ENCODE measurements at regions of chr9 and their contacts with region 1.

Region 1: GRCh38 chr9:129653823-129654553 is 11.5 kb upstream of the PRRX2 start:
- DNase-seq: peak in 2 of 5 donors; percentile 22 to 56
- H3K4me3 ChIP-seq: no peak overlapping the region
- H3K27ac ChIP-seq: peak overlapping the region in 1 of 2 donors; percentile 47
- H3K4me1 ChIP-seq: peaks cover 8% of the 10 kb centered on the region
- H3K27me3 ChIP-seq: no peaks in the 10 kb centered on the region
- CTCF ChIP-seq: no peak
- EP300 ChIP-seq: no peak
- POLR2A ChIP-seq: no peak

Region 2: GRCh38 chr9:127930231-127931091 is 1723.5 kb before region 1 on chr9 and contains the start of gene PIP5KL1:
- intact Hi-C with region 1: no loop called
- DNase-seq: peak; percentile 79 to 91 (median 86)
- H3K4me3 ChIP-seq: peak within 1 kb of the TSS; percentile 40
- H3K27ac ChIP-seq: no peak within 1 kb of the TSS
- H3K4me1 ChIP-seq: peaks cover 6% of the 10 kb centered on the region
- H3K27me3 ChIP-seq: no peaks in the 10 kb centered on the region
- CTCF ChIP-seq: no peak
- EP300 ChIP-seq: no peak
- POLR2A ChIP-seq: no peak
- total RNA-seq, gene PIP5KL1: 0.48 to 4.0 (median 2.0) TPM

Region 3: GRCh38 chr9:129725795-129726251 is 71.8 kb after region 1 on chr9:
- intact Hi-C with region 1: loop called in 1 of 4 experiments (anchors 2 kb)
- DNase-seq: no peak
- H3K4me3 ChIP-seq: no peak overlapping the region
- H3K27ac ChIP-seq: no peak overlapping the region
- H3K4me1 ChIP-seq: no peaks in the 10 kb centered on the region
- H3K27me3 ChIP-seq: no peaks in the 10 kb centered on the region
- CTCF ChIP-seq: no peak
- EP300 ChIP-seq: no peak
- POLR2A ChIP-seq: no peak